HepG2 (cell line): ENCODE measurements at regions of chr4 and their contacts with region 1.

Region 1: GRCh38 chr4:185774845-185775680 is 36.9 kb downstream of the SORBS2 start:
- DNase-seq: no peak
- ATAC-seq: peak; percentile 47
- H3K4me3 ChIP-seq: peak overlapping the region; percentile 9 to 46 (median 45); a peak in 5 of 6 replicates
- H3K27ac ChIP-seq: peak overlapping the region; percentile 96
- H3K4me1 ChIP-seq: peaks cover 63% of the 10 kb centered on the region
- H3K27me3 ChIP-seq: no peaks in the 10 kb centered on the region
- CTCF ChIP-seq: no peak
- EP300 ChIP-seq: no peak
- POLR2A ChIP-seq: no peak
- RAD21 ChIP-seq: no peak

Region 2: GRCh38 chr4:185709802-185710486 is 65.1 kb before region 1 on chr4:
- CTCF ChIA-PET with region 1: no interaction called
- POLR2A ChIA-PET with region 1: interaction called, 57 read pairs
- in situ Hi-C with region 1: no loop called
- intact Hi-C with region 1: loop called (anchors 2 kb)
- DNase-seq: peak; percentile 74
- ATAC-seq: peak; percentile 29
- H3K4me3 ChIP-seq: no peak overlapping the region
- H3K27ac ChIP-seq: peak overlapping the region; percentile 48
- H3K4me1 ChIP-seq: peaks cover 58% of the 10 kb centered on the region
- H3K27me3 ChIP-seq: no peaks in the 10 kb centered on the region
- CTCF ChIP-seq: no peak
- EP300 ChIP-seq: peak in 1 of 2 experiments; percentile 31; a peak in 1 of 4 replicates
- POLR2A ChIP-seq: no peak
- RAD21 ChIP-seq: no peak

Region 3: GRCh38 chr4:185721190-185721932 is 53.7 kb before region 1 on chr4:
- CTCF ChIA-PET with region 1: no interaction called
- POLR2A ChIA-PET with region 1: interaction called, 6 read pairs
- in situ Hi-C with region 1: no loop called
- intact Hi-C with region 1: loop called (anchors 2 kb)
- DNase-seq: peak; percentile 68
- ATAC-seq: peak; percentile 92
- H3K4me3 ChIP-seq: peak overlapping the region; percentile 2 to 20 (median 14); a peak in 1 of 6 replicates
- H3K27ac ChIP-seq: peak overlapping the region; percentile 85
- H3K4me1 ChIP-seq: peaks cover 72% of the 10 kb centered on the region
- H3K27me3 ChIP-seq: no peaks in the 10 kb centered on the region
- CTCF ChIP-seq: no peak
- EP300 ChIP-seq: no peak
- POLR2A ChIP-seq: no peak
- RAD21 ChIP-seq: no peak

Region 4: GRCh38 chr4:185792384-185793115 is 17.5 kb after region 1 on chr4:
- CTCF ChIA-PET with region 1: no interaction called
- POLR2A ChIA-PET with region 1: no interaction called
- in situ Hi-C with region 1: no loop called
- intact Hi-C with region 1: loop called (anchors 2 kb)
- DNase-seq: peak; percentile 95
- ATAC-seq: peak; percentile 94
- H3K4me3 ChIP-seq: no peak overlapping the region
- H3K27ac ChIP-seq: peak overlapping the region; percentile 68
- H3K4me1 ChIP-seq: peaks cover 43% of the 10 kb centered on the region
- H3K27me3 ChIP-seq: no peaks in the 10 kb centered on the region
- CTCF ChIP-seq: no peak
- EP300 ChIP-seq: peak in 1 of 2 experiments; percentile 73; a peak in 2 of 4 replicates
- POLR2A ChIP-seq: no peak
- RAD21 ChIP-seq: no peak